Heart right ventricle (tissue), 16 donors: ENCODE measurements at regions of chr20 and their contacts with region 1.

Region 1: GRCh38 chr20:50165684-50166554 is 12.4 kb upstream of the PEDS1 start:
- DNase-seq: peak; percentile 92 to 98
- ATAC-seq: peak; percentile 95 to 99 (median 98)
- H3K4me3 ChIP-seq: peak overlapping the region in 8 of 10 donors; percentile 8 to 49 (median 40)
- H3K27ac ChIP-seq: peak overlapping the region; percentile 26 to 95 (median 88)
- H3K4me1 ChIP-seq: peaks cover 5 to 42% (median 20%) of the 10 kb centered on the region in 9 donors
- H3K27me3 ChIP-seq: no peaks in the 10 kb centered on the region
- CTCF ChIP-seq: peak in 1 of 9 donors; percentile 22

Region 2: DNA sequence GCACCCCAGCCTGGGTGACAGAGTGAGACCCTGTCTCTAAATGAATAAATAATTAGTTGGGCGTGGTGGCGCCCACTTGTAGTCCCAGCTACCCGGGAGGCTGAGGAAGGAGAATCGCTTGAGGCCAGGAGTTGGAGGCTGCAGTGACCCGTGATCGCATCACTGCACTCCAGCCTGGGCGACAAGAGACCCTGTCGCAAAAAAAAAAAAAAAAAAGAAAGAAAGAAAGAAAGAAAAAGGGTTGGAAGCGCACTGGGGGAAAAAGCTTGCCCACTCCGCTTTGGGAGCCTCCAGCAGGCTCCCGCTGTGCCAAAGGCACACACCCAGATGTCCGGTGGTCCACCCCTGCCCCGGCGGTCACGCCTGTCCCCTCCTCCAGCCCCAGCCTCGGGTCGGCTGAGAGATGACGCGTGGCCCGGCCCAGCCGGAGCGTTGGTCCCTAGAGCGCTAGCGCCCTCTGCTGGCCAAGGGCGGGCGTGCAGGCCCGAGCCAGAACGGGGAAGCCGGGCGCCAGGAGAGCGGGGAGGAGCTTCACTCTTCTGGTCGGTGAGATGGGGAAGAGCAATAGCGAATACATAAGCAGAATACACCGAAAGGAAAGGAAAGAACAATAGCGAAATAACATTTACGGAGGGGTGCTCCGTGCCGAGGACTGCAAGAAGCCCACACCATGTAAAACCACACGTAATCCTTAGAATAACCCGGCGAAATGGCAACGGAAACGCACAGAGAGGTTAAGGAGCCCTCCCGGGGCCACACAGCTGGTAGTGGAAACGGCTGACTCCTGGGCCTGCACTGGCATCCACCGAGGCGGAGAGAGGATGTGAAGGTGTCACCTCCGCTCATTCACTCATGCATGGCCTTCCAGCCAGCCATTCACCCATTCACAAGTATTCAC is 94.7 kb before region 1 on chr20:
- intact Hi-C with region 1: loop called in 1 of 10 experiments (anchors 5 kb)
- DNase-seq: peak; percentile 85 to 94
- ATAC-seq: peak; percentile 90 to 96 (median 95)
- H3K4me3 ChIP-seq: peak overlapping the region in 9 of 10 donors; percentile 4 to 53 (median 47)
- H3K27ac ChIP-seq: peak overlapping the region in 1 of 10 donors; percentile 73
- H3K4me1 ChIP-seq: peaks cover 0 to 25% (median 8%) of the 10 kb centered on the region in 9 donors
- H3K27me3 ChIP-seq: no peaks in the 10 kb centered on the region
- CTCF ChIP-seq: peak; percentile 99 to 100 (median 100)

Region 3: DNA sequence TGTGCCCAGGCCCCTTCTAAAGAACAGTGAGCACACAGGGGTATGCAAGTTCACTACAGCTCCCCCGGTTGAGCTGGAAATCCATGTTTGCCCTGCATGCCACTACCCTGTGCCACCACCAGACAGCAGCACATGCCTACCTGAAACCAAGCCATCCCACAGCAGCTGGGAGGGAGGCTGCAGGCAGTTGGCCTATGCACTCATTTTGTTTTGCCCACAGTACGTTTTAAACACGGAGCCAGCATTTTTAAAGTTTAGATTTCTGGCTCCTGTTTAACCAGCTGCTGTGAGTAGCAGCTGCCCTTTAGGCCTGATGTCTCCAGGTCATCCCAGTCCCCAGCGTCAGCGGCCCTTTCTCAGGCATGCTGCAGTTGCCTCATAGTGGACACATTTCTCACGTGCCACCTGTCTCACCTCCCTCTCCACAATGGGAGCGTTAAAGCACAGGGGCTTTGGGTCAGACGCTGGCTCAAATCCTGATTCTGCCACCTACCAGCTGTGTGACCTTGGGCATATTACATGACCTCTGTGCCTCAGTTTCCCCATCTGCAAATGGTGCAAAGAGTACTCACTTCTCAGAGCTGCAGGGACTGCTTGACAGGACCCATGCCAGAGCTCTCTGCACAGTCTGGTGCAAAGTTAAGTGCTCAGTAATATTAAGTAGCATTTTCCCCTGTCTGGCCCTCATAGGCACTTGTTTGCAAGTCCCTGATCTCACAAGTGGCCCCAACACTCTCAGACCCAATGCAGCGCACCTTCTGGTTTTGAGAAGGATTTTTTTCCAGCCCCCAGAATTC is 44.8 kb before region 1 on chr20:
- intact Hi-C with region 1: loop called (anchors 1 to 5 kb)
- DNase-seq: peak in 1 of 2 donors; percentile 58
- ATAC-seq: peak; percentile 62 to 82 (median 77)
- H3K4me3 ChIP-seq: no peak overlapping the region
- H3K27ac ChIP-seq: peak overlapping the region in 2 of 10 donors; percentile 11 to 31
- H3K4me1 ChIP-seq: peaks cover 0 to 15% (median 7%) of the 10 kb centered on the region in 9 donors
- H3K27me3 ChIP-seq: no peaks in the 10 kb centered on the region
- CTCF ChIP-seq: peak; percentile 60 to 84 (median 80)

Region 4: DNA sequence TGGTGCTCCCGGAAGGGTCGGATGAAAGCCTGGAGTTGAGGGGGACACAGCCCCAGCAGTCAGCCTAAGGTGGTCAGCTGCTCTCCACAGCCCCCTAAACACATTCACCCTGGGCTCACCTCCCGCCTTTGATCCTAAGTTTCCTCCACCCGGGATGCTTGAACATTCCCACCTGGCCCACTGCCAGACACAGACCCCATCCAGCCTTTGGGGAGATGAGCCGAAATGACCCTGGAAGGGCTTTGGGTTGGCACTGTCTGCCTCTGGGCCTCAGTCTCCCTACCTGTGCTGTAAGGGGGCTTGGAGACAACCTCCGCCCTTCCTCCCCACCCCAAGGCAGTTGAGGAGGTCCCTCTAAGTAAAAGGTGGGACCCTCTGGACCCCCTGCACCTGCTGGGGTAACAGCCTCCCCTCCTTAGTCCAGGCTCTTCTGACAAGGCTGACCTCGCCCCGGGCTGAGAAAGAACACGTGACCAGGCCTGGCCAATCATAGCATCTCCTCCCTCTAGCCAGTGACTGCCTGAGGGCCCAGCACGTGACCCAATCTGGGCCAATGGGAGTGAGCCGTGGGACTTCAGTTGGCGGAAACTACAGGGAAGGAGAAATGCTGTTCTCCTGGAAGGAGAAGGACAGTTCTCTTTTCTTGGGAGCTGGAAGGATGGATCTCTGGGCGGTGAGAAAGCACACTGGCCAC is 36.1 kb before region 1 on chr20:
- intact Hi-C with region 1: loop called in 1 of 10 experiments (anchors 5 kb)
- DNase-seq: no peak
- ATAC-seq: peak in 1 of 8 donors; percentile 11
- H3K4me3 ChIP-seq: no peak overlapping the region
- H3K27ac ChIP-seq: peak overlapping the region in 2 of 10 donors; percentile 35 to 70
- H3K4me1 ChIP-seq: peaks cover 0 to 38% (median 23%) of the 10 kb centered on the region in 9 donors
- H3K27me3 ChIP-seq: no peaks in the 10 kb centered on the region
- CTCF ChIP-seq: no peak